ENCODE measurements at regions of chr18 and their contacts with region 1.

Region 1: GRCh38 chr18:9827641-9828505 is 57.9 kb upstream of the TXNDC2 start:
- DNase-seq: peak in 1 of 3 donors; percentile 35
- ATAC-seq: peak; percentile 70
- H3K4me3 ChIP-seq: no peak overlapping the region
- H3K4me1 ChIP-seq: peaks cover 17% of the 10 kb centered on the region
- CTCF ChIP-seq: no peak

Region 2: GRCh38 chr18:9919564-9920232 is 91.8 kb after region 1 on chr18:
- intact Hi-C with region 1: loop called in 1 of 2 experiments (anchors 5 kb)
- DNase-seq: no peak
- ATAC-seq: no peak
- H3K4me3 ChIP-seq: no peak overlapping the region
- H3K4me1 ChIP-seq: peaks cover 44% of the 10 kb centered on the region
- CTCF ChIP-seq: no peak